Caco-2 (cell line): ENCODE measurements at regions of chr3 and their contacts with region 1.

Region 1: GRCh38 chr3:47664519-47664918 is 85.9 kb upstream of the CSPG5 start:
- DNase-seq: peak in 1 of 2 experiments; percentile 19
- H3K4me3 ChIP-seq: no peak overlapping the region
- H3K4me3 Mint-ChIP-seq: no peak overlapping the region
- H3K27ac Mint-ChIP-seq: no peak overlapping the region
- H3K4me1 ChIP-seq: peaks cover 23% of the 10 kb centered on the region
- H3K4me1 Mint-ChIP-seq: peaks cover 11% of the 10 kb centered on the region
- H3K27me3 ChIP-seq: no peaks in the 10 kb centered on the region
- H3K27me3 Mint-ChIP-seq: no peaks in the 10 kb centered on the region
- CTCF ChIP-seq: peak in 1 of 2 experiments; percentile 25

Region 2: DNA sequence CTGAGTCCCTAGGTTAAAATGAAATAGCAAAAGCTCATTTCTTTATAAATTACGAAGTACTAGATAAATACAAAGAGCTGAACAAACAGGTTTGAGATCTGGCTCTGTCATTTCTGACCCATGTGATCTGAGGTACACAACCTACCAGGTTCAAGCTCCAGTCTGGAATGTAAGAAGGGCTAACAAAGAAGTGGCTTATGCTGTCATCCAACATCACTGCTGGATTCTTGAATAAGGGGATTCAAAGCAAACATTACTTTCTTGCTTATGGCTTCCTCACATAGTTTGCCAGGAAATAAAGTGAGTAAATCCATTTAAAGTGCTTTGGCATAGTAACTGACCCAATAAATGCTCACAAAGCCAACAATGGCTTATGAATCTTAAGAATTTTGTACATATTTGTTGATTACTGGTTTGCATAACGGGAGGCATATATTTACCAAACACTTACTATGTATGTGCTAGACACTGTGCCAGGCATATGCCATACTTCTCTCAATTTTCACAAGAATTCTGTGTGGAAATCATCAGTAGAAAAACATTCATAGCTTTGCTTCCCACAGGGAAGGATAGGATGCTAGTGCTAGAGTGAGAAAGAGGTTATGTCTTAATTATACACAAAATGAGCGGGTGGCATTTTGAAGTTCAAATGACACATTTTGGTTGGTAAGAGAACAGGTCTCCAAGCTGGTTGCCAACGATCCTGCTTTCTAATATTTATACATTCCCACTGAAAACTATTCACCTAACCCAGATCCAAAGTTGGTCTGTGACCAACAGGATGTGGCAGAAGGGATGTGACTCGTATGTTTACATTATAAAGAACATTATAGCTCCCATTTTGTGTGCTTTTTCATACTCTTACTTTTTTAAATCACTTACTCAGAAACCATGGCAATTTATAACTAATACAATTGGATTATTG is 47.2 kb before region 1 on chr3:
- CTCF ChIA-PET with region 1: interaction called, 3 read pairs
- POLR2A ChIA-PET with region 1: interaction called, 11 read pairs
- intact Hi-C with region 1: no loop called
- DNase-seq: peak in 1 of 2 experiments; percentile 6
- H3K4me3 ChIP-seq: no peak overlapping the region
- H3K4me3 Mint-ChIP-seq: no peak overlapping the region
- H3K27ac Mint-ChIP-seq: no peak overlapping the region
- H3K4me1 ChIP-seq: peaks cover 10% of the 10 kb centered on the region
- H3K4me1 Mint-ChIP-seq: peaks cover 8% of the 10 kb centered on the region
- H3K27me3 ChIP-seq: no peaks in the 10 kb centered on the region
- H3K27me3 Mint-ChIP-seq: no peaks in the 10 kb centered on the region
- CTCF ChIP-seq: no peak

Region 3: DNA sequence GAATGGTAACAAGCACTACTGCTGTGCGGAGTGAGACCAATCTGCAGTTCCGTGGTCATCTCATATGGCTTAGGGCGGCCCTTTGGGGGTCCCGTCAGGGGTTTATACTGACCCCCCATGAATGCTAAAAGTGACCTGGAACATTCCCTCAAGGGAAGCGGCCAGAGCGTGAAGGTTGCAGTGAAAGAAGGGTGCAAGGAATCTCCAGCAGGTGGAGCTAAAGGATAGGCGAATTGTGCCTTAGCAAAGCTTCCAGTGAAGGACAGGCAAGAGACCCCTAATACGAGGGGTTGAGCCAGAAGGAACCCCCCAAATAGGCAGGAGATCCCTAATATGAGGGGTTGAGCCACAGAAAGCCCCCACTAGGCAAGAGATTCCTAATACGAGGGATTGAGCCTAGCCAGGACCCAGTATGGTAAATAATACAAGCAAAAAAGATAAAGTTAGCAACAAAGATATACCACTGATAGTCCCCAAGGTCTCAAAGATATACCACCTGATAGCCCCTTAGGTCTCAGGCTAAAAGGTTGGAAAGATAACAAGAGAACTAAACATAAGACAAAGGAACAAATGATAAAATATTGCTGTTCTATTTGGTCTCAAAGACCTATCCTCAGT is 609.2 kb after region 1 on chr3:
- CTCF ChIA-PET with region 1: no interaction called
- POLR2A ChIA-PET with region 1: no interaction called
- intact Hi-C with region 1: no loop called
- DNase-seq: peak; percentile 60 to 77
- H3K4me3 ChIP-seq: no peak overlapping the region
- H3K4me3 Mint-ChIP-seq: no peak overlapping the region
- H3K27ac Mint-ChIP-seq: no peak overlapping the region
- H3K4me1 ChIP-seq: peaks cover 32% of the 10 kb centered on the region
- H3K4me1 Mint-ChIP-seq: peaks cover 35% of the 10 kb centered on the region
- H3K27me3 ChIP-seq: no peaks in the 10 kb centered on the region
- H3K27me3 Mint-ChIP-seq: no peaks in the 10 kb centered on the region
- CTCF ChIP-seq: peak; percentile 79 to 80